ENCODE measurements at regions of chr21 and their contacts with region 1.

Region 1: DNA sequence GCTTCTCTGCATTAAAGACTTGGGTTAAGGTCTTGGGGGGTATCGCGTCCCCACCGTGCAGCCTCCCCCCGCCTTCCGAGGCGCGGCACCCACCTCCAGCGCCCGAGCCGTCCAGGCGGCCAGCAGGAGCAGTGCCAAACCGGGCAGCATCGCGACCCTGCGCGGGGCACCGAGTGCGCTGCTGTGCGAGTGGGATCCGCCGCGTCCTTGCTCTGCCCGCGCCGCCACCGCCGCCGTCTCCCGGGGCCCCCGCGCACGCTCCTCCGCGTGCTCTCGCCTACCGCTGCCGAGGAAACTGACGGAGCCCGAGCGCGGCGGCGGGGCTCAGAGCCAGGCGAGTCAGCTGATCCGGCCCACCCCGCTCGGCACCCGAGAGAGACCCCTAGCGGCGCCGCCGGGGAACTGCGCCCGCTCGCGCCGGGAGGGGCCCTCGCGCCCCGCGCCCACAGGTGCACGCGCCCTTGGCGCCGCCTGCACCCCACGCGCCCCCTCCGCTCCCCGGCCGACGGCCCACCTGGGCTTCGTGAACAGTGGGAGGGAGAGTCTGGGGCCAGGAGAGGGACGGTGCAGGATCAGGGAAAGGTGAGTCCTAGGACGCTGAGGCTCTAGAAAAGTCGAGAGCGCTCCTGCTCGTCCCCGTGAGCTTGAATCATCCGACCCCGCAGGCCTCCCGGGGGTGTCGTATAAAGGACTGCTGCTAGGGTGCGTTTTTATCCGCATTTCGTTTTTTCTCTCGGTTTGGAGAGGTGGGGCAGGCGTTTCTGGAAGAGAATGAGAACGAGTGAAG is at the start of gene APP:
- DNase-seq: peak; percentile 73
- H3K4me3 ChIP-seq: peak within 1 kb of the TSS; percentile 68 to 94 (median 91)
- H3K27ac ChIP-seq: peak within 1 kb of the TSS; percentile 80
- H3K4me1 ChIP-seq: peaks cover 35% of the 10 kb centered on the region
- H3K27me3 ChIP-seq: no peaks in the 10 kb centered on the region
- CTCF ChIP-seq: peak; percentile 81 to 93
- POLR2A ChIP-seq: peak; percentile 82
- total RNA-seq, gene APP: 811 and 928 TPM in 2 replicates

Region 2: GRCh38 chr21:25881525-25882376 is 288.9 kb before region 1 on chr21:
- CTCF ChIA-PET with region 1: interaction called, 8 read pairs
- POLR2A ChIA-PET with region 1: no interaction called
- dilution Hi-C with region 1: loop called (anchors 25 kb)
- intact Hi-C with region 1: loop called (anchors 1 kb)
- DNase-seq: peak; percentile 65
- H3K4me3 ChIP-seq: no peak overlapping the region
- H3K27ac ChIP-seq: no peak overlapping the region
- H3K4me1 ChIP-seq: peaks cover 23% of the 10 kb centered on the region
- H3K27me3 ChIP-seq: no peaks in the 10 kb centered on the region
- CTCF ChIP-seq: peak; percentile 87 to 89
- POLR2A ChIP-seq: no peak

Region 3: DNA sequence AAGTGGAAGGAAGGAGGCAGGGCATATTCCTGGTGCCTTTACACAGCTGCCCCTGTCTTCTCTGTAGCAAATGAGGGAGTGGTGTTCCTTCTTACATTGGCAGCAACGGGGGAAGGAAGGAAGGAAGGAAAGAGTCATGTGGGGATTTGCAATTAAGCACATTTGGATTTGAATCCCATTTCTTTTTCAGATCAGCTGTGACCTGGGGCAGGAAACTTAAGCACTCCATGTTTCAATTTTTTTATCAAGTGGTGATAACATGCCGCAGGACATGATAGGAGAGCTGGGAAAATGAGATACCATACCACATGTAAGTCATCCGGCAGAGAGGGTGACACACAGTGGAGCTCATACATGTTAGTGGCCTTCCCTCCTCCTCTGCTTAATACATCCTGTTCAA is 186.9 kb before region 1 on chr21:
- CTCF ChIA-PET with region 1: interaction called, 3 read pairs
- POLR2A ChIA-PET with region 1: no interaction called
- dilution Hi-C with region 1: no loop called
- intact Hi-C with region 1: loop called (anchors 5 kb)
- DNase-seq: peak; percentile 84
- H3K4me3 ChIP-seq: no peak overlapping the region
- H3K27ac ChIP-seq: peak overlapping the region; percentile 62
- H3K4me1 ChIP-seq: peaks cover 65% of the 10 kb centered on the region
- H3K27me3 ChIP-seq: no peaks in the 10 kb centered on the region
- CTCF ChIP-seq: no peak
- POLR2A ChIP-seq: peak; percentile 11

Region 4: DNA sequence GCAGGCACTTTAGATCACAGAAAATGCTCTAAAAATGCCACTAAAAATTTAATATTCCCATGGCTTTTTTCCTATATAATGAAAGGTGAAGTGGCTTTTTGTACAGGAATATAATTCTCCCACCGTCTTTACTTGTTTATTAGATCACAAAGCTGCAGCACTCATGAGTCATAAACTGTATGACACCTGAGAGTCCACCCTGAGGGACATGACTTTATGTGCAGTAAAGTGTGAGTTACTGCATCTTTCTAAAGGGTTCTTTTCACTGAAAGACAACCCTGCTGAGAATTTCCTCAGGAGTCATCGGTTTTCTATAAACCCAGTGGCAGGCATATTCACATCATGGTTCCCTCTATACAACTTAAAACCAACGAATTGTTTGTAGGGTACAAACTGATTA is 77.6 kb before region 1 on chr21:
- CTCF ChIA-PET with region 1: no interaction called
- POLR2A ChIA-PET with region 1: no interaction called
- dilution Hi-C with region 1: no loop called
- intact Hi-C with region 1: loop called (anchors 5 kb)
- DNase-seq: no peak
- H3K4me3 ChIP-seq: no peak overlapping the region
- H3K27ac ChIP-seq: no peak overlapping the region
- H3K4me1 ChIP-seq: peaks cover 22% of the 10 kb centered on the region
- H3K27me3 ChIP-seq: no peaks in the 10 kb centered on the region
- CTCF ChIP-seq: no peak
- POLR2A ChIP-seq: no peak

Region 5: GRCh38 chr21:26148079-26148839 is 22.4 kb before region 1 on chr21:
- CTCF ChIA-PET with region 1: interaction called, 6 read pairs
- POLR2A ChIA-PET with region 1: no interaction called
- dilution Hi-C with region 1: no loop called
- intact Hi-C with region 1: loop called (anchors 2 kb)
- DNase-seq: peak; percentile 64
- H3K4me3 ChIP-seq: peak overlapping the region in 1 of 3 experiments; percentile 17
- H3K27ac ChIP-seq: peak overlapping the region; percentile 75
- H3K4me1 ChIP-seq: peaks cover 40% of the 10 kb centered on the region
- H3K27me3 ChIP-seq: no peaks in the 10 kb centered on the region
- CTCF ChIP-seq: no peak
- POLR2A ChIP-seq: no peak

Measured in endothelial cell of umbilical vein (primary cell).